ENCODE measurements at regions of chr7 and their contacts with region 1.

Region 1: GRCh38 chr7:105759670-105760550 is 116.5 kb downstream of the ATXN7L1 start:
- DNase-seq: peak; percentile 61
- H3K4me3 Mint-ChIP-seq: no peak overlapping the region
- H3K27ac Mint-ChIP-seq: no peak overlapping the region
- H3K4me1 Mint-ChIP-seq: no peaks in the 10 kb centered on the region
- H3K27me3 Mint-ChIP-seq: no peaks in the 10 kb centered on the region
- CTCF ChIP-seq: peak; percentile 62

Region 2: DNA sequence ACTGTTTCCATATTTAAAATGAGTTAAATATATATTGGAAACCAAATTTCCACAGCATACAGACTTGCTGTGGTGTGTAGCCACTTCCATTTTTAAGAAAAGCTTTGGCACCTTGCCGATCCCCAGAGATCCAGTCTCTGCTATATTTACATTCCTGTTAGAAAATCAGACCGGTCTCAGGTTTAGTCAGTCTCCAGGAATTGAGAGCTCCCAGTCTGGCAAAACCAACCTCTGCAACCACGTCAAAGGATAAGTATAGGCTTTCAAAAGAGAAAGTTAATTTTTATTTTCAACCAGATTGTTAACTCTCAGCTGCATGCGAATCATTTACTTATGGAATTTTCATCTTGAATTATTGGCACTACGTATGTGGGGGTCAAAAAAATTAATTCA is 266.0 kb before region 1 on chr7:
- CTCF ChIA-PET with region 1: no interaction called
- POLR2A ChIA-PET with region 1: no interaction called
- intact Hi-C with region 1: no loop called
- DNase-seq: no peak
- H3K4me3 Mint-ChIP-seq: no peak overlapping the region
- H3K27ac Mint-ChIP-seq: no peak overlapping the region
- H3K4me1 Mint-ChIP-seq: no peaks in the 10 kb centered on the region
- H3K27me3 Mint-ChIP-seq: no peaks in the 10 kb centered on the region
- CTCF ChIP-seq: no peak

Region 3: GRCh38 chr7:105776058-105776751 is 16.3 kb after region 1 on chr7:
- CTCF ChIA-PET with region 1: interaction called, 25 read pairs
- POLR2A ChIA-PET with region 1: no interaction called
- intact Hi-C with region 1: no loop called
- DNase-seq: peak; percentile 89
- H3K4me3 Mint-ChIP-seq: no peak overlapping the region
- H3K27ac Mint-ChIP-seq: peak overlapping the region; percentile 27
- H3K4me1 Mint-ChIP-seq: peaks cover 8% of the 10 kb centered on the region
- H3K27me3 Mint-ChIP-seq: no peaks in the 10 kb centered on the region
- CTCF ChIP-seq: no peak

Region 4: DNA sequence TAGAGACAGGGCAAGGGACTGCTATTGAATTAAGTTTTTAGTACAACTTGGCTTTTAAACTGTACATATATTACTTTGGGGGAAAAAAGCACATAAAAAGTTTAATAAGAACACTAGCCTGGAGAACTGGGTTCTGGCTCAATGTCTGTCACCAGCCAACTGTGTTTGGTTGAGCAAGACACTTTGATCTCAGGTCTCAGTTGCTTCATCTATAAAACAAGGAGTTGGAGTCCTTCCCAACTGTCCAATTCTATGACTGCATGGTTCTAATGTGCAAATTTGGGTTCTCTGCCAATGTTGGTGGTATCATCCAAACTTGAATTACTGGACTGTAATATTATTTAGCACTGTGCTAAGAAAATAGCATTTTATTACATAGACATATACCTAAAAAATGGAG is 66.2 kb after region 1 on chr7:
- CTCF ChIA-PET with region 1: no interaction called
- POLR2A ChIA-PET with region 1: no interaction called
- intact Hi-C with region 1: no loop called
- DNase-seq: peak; percentile 75
- H3K4me3 Mint-ChIP-seq: no peak overlapping the region
- H3K27ac Mint-ChIP-seq: no peak overlapping the region
- H3K4me1 Mint-ChIP-seq: peaks cover 26% of the 10 kb centered on the region
- H3K27me3 Mint-ChIP-seq: no peaks in the 10 kb centered on the region
- CTCF ChIP-seq: no peak

Region 5: DNA sequence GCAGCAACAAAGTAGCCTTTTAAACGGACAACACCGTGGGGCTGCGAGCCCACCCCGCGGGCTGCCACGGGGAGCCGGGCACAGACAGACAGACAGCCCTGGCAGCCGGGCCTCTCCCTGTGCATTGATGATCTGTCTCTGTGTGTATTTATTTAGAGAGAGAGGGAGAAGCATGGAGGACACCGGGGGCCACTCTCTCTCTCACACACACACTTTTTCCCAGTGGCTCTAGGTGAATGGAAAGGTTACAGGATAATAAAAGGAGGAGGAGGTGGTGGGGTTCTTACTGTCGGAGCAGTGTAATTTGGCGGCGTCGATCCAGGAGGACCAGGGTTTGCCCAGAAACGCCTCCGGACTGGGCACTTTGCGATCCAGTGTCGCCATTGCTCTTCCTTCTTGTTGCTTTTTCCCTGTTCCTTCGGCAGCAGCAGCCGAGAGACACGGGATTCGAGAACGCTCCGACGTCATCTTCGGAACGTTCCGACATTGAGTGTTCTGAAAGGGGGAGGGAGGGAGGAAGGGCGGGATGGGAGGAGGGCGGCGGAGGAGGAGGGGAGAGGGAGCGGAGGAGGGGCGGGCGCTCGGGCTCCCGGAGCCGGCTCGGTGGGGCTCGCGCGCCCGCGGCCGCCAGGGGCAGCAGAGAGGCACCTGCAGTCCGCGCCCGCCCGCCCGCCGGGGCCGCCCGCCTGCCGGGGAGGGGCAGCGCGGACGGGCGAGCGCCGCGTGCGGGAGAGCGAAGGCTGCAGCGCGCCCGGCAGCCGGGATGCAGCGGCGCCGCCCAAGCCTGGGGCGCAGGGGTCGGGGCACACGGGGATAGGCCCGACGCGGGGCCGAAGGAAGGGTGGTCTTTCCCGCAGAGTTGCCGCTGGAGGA is 116.4 kb after region 1 on chr7 and contains the start of gene ATXN7L1:
- CTCF ChIA-PET with region 1: interaction called, 7 read pairs
- POLR2A ChIA-PET with region 1: no interaction called
- intact Hi-C with region 1: loop called (anchors 2 kb)
- DNase-seq: peak; percentile 98
- H3K4me3 Mint-ChIP-seq: peak within 1 kb of the TSS; percentile 87
- H3K27ac Mint-ChIP-seq: peak within 1 kb of the TSS; percentile 97
- H3K4me1 Mint-ChIP-seq: peaks cover 5% of the 10 kb centered on the region
- H3K27me3 Mint-ChIP-seq: no peaks in the 10 kb centered on the region
- CTCF ChIP-seq: peak; percentile 50
- total RNA-seq, gene ATXN7L1: 8.1 and 10.0 TPM in 2 replicates

Region 6: DNA sequence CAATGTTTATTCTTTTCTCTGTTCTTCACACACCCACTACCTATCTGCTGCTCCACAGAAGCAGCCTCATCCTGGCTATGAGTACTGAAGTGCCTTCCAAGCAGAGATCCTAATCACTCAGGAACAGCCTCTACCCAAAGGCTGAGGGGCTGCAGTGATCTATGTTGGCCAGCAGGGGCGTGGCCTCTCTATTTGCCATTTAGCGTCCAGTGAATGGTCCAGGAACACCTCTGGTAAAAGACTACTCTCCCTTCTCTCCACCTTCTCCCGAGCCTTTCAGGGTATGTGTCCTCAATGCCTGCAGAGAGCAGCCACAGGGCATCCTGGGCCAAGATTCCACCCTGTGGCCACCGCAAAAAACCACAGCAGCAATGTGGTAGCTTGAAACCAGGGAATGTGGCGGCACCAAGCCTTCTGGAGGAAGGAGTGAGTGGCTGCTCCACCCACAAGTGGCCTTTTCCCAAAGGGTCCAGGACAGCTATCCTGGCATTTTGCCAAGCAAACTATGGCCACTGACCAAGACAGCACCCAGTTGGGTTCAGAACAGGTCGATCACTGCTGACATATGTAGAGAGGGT is 281.3 kb after region 1 on chr7:
- CTCF ChIA-PET with region 1: interaction called, 138 read pairs
- POLR2A ChIA-PET with region 1: no interaction called
- intact Hi-C with region 1: loop called (anchors 1 kb)
- DNase-seq: peak; percentile 66
- H3K4me3 Mint-ChIP-seq: no peak overlapping the region
- H3K27ac Mint-ChIP-seq: no peak overlapping the region
- H3K4me1 Mint-ChIP-seq: peaks cover 13% of the 10 kb centered on the region
- H3K27me3 Mint-ChIP-seq: peaks cover 22% of the 10 kb centered on the region
- CTCF ChIP-seq: peak; percentile 59

Region 7: GRCh38 chr7:106166655-106167342 is 406.9 kb after region 1 on chr7:
- CTCF ChIA-PET with region 1: interaction called, 7 read pairs
- POLR2A ChIA-PET with region 1: no interaction called
- intact Hi-C with region 1: loop called (anchors 5 kb)
- DNase-seq: peak; percentile 83
- H3K4me3 Mint-ChIP-seq: no peak overlapping the region
- H3K27ac Mint-ChIP-seq: no peak overlapping the region
- H3K4me1 Mint-ChIP-seq: no peaks in the 10 kb centered on the region
- H3K27me3 Mint-ChIP-seq: no peaks in the 10 kb centered on the region
- CTCF ChIP-seq: peak; percentile 77

Region 8: DNA sequence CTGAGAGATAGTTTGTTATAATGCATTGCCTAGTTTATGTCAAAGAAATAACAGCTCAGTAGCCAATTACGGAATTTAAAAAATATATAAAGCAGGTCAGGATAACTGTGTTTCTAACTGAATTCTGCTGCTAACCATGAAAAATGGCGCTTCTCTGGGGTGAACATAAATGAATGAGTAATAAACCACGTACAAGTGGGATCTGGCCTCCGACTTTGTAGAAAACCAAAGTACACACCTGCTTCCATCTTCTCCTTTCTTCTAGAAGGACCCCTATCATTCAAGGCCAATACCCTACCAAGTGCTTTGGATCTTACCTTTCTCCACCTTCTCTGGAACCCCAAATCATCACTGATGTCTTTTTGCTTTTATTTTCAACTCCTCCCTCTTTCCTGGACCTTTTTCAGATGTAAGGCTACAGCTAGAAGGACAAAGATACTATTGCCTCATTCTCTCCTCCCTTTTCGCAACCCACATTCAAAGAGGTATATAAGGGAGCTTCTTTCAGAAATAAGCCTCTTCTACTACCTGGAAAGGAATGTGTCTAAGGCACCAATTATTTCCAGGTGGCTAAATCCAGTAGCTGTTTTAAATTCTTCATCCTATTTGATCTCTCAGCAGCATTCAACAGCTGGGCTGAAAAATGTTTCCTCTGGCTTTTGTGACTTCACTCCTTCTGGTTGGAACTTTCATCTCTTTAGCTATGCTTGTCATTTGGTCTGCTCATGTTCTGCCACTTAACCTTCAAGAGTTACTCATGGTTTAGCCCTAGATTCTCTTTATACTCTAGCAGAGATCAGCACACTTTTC is 487.2 kb after region 1 on chr7:
- CTCF ChIA-PET with region 1: no interaction called
- POLR2A ChIA-PET with region 1: no interaction called
- intact Hi-C with region 1: no loop called
- DNase-seq: peak; percentile 29
- H3K4me3 Mint-ChIP-seq: no peak overlapping the region
- H3K27ac Mint-ChIP-seq: peak overlapping the region; percentile 2
- H3K4me1 Mint-ChIP-seq: peaks cover 10% of the 10 kb centered on the region
- H3K27me3 Mint-ChIP-seq: no peaks in the 10 kb centered on the region
- CTCF ChIP-seq: no peak